Activated CD4-positive, alpha-beta memory T cell treated with anti-CD3 and anti-CD28 coated beads, Interleukin-2, amount 10 ng/mL, durations not matched to agents 7 days and 5 days (primary cell): ENCODE measurements at regions of chr2 and their contacts with region 1.

Region 1: DNA sequence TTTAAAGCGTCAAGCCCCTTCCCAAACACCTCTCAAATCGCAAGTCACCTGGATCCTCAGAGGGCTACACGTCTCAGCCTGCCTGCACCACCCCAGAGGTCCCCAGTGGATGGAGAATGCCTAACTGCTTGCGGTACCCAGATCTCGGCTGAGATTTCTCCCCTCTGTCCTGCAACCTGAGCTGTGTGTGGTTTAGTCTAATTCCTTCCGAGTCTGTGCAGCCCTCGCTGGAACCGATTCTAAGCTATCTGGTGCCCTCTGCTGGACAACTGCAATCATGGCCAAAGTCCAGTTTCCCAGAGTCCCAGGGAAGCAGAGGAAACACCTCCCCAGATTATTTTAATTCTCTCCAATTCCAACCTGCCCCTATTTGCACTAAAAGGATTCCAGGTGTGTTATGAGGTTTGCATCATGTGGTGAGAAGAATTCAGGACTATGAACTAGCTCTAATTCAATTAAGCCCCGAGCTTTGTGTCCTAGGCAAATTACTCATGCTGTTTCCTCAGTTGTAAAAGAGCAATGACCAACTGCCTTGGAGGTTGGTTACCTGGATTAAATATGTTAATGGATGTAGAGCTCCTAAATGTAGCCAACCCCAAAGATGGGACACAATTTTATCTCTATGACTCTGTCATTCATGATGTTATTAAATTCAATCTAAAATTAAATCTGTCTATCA is 276.1 kb upstream of the NCKAP5 start:
- DNase-seq: peak; percentile 57
- H3K4me3 Mint-ChIP-seq: no peak overlapping the region
- H3K27ac Mint-ChIP-seq: no peak overlapping the region
- H3K4me1 Mint-ChIP-seq: no peaks in the 10 kb centered on the region
- H3K27me3 Mint-ChIP-seq: peaks cover 2% of the 10 kb centered on the region

Region 2: DNA sequence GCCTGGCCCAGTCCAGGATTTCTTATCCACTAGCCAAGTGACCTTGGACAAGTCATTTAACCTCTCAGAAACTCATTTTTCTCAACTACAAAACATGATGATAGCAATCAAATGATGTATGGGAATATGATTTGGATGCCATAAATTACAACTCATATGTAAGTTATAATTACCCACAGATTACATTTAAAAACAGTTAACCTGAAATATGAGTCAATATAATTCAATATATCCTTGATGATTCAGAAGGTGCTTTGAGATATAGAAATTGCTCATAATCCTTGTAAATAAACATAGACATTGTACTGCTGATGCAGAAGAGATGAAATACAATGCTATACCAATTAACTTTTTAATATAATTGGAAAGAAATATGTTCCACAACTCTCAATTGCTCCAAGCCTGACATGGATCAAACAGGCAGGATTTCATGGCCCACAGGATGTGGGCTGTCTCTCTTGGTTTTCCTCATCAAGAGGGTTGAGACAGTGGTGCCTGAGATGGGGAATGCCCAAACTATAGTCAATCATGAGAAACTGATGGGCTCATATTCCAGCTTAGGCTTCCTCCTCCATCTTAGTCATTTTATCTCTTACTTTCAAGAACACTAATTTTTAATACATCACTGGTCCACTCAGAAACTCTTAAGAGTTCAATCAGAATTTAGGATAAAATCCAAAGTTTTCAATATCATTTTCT is 325.6 kb before region 1 on chr2:
- CTCF ChIA-PET with region 1: interaction called, 12 read pairs
- POLR2A ChIA-PET with region 1: no interaction called
- DNase-seq: no peak
- H3K4me3 Mint-ChIP-seq: no peak overlapping the region
- H3K27ac Mint-ChIP-seq: no peak overlapping the region
- H3K4me1 Mint-ChIP-seq: no peaks in the 10 kb centered on the region
- H3K27me3 Mint-ChIP-seq: no peaks in the 10 kb centered on the region

Region 3: GRCh38 chr2:133859578-133859977 is 15.2 kb after region 1 on chr2:
- CTCF ChIA-PET with region 1: interaction called, 15 read pairs
- POLR2A ChIA-PET with region 1: no interaction called
- DNase-seq: no peak
- H3K4me3 Mint-ChIP-seq: no peak overlapping the region
- H3K27ac Mint-ChIP-seq: no peak overlapping the region
- H3K4me1 Mint-ChIP-seq: no peaks in the 10 kb centered on the region
- H3K27me3 Mint-ChIP-seq: no peaks in the 10 kb centered on the region

Region 4: GRCh38 chr2:134137182-134137611 is 292.8 kb after region 1 on chr2:
- CTCF ChIA-PET with region 1: no interaction called
- POLR2A ChIA-PET with region 1: no interaction called
- DNase-seq: no peak
- H3K4me3 Mint-ChIP-seq: no peak overlapping the region
- H3K27ac Mint-ChIP-seq: peak overlapping the region; percentile 75
- H3K4me1 Mint-ChIP-seq: peaks cover 58% of the 10 kb centered on the region
- H3K27me3 Mint-ChIP-seq: no peaks in the 10 kb centered on the region